ENCODE measurements at regions of chr16 and their contacts with region 1.

Region 1: DNA sequence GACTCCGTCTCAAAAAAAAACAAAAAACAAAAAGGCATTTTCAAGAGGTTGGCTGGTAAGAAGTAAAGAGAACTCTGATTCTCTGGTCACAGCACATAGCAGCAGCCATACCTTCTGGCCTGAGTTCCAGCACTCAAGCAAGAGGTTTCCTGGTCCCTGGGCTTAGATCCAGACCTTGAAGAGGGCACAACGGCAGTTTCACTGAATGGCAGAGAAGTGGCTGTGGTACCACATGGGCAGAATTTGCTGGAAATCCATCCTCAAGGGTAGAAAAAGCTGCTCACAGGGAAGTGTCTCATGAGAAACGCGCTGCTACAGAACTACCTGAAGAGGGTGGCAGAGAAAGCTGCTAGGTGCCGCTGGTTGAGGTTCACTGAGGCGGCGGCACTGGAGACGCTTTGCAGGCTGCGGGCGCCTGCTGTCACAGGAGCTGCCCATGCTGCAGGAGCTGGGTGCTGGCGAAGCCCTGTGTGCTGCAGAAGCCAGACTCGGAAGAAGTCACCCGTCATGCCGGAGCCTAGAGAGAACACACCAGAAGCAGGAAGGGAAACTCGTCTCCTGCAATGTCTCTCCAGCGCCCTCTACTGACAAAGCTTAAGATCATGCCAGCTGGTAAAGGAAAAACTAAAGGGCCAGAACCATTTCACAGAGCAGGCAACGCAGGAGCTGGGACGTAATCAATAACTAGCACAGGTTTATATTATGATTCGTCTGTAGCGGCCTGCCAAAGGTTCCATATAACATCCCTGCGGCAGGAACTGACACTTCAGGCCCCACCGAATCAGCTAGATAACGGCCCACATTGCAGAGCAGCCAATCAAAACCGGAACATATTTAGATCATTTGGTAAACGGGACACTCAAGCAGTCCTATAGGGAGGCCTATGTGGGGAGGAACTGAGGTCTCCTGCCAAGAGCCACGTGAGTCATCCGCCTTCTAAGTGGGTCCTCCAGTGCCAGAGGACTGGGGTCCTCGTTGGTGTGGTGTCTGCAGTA is 5.4 kb upstream of the ZNF213 start:
- DNase-seq: peak; percentile 82
- H3K4me3 Mint-ChIP-seq: peak overlapping the region; percentile 88
- H3K27ac Mint-ChIP-seq: peak overlapping the region; percentile 88
- H3K4me1 Mint-ChIP-seq: peaks cover 31% of the 10 kb centered on the region
- H3K27me3 Mint-ChIP-seq: no peaks in the 10 kb centered on the region

Region 2: DNA sequence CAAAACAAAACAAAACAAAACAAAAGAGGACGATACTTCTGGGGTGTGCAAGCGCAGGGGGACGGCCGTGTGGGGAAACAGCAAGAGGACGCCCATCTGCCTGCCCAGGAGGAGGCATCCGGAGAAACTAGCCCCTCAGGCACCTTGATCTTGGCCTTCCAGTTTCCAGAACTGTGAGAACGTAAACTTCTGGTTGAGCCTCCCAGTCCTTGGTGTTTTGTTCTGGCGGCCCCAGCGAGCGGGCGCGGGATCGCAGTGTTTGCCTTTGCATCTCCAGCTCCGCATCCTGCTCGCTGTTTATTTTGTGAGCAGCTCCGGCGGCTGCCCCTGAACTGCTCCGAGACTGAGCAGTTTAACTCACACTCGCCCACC is 84.1 kb before region 1 on chr16:
- CTCF ChIA-PET with region 1: interaction called, 16 read pairs
- POLR2A ChIA-PET with region 1: no interaction called
- intact Hi-C with region 1: no loop called
- DNase-seq: peak; percentile 54
- H3K4me3 Mint-ChIP-seq: peak overlapping the region; percentile 68
- H3K27ac Mint-ChIP-seq: no peak overlapping the region
- H3K4me1 Mint-ChIP-seq: peaks cover 14% of the 10 kb centered on the region
- H3K27me3 Mint-ChIP-seq: peaks cover 30% of the 10 kb centered on the region

Region 3: DNA sequence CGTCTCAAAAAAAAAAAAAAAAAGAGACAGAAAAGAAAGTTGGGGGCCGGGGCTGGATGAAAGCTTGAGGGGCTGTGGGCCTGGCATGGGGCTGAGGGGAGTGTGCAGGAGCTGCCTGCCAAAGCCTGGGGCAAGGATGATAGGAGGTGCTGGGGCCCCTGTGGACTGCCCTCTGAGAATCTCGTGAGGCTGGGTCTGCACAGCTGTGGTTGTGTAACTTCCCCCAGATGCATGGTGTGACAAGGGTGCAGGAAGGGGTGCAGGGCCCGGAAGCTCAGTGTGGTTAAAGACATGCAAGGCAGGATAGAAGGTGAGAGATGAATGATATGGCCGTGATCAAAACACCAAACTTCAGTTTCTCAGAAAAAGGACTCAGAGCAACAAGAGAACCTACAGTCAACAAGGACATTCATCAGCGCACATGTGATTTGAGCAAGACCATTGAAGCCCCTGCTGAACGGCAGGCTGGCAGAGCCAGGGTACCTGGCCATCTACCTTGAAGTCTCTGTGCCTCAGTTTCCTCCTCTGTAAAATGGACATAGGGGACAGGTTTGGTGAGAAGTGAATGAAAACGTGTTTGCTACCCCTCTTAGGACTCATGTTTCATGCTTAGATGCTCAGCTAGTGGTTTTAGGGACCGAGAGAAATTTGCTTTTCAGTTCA is 54.4 kb before region 1 on chr16:
- CTCF ChIA-PET with region 1: interaction called, 31 read pairs
- POLR2A ChIA-PET with region 1: interaction called, 6 read pairs
- intact Hi-C with region 1: no loop called
- DNase-seq: peak; percentile 94
- H3K4me3 Mint-ChIP-seq: peak overlapping the region; percentile 78
- H3K27ac Mint-ChIP-seq: peak overlapping the region; percentile 99
- H3K4me1 Mint-ChIP-seq: peaks cover 89% of the 10 kb centered on the region
- H3K27me3 Mint-ChIP-seq: no peaks in the 10 kb centered on the region

Region 4: GRCh38 chr16:3113765-3114479 is 15.5 kb before region 1 on chr16:
- CTCF ChIA-PET with region 1: interaction called, 22 read pairs
- POLR2A ChIA-PET with region 1: interaction called, 3 read pairs
- intact Hi-C with region 1: no loop called
- DNase-seq: no peak
- H3K4me3 Mint-ChIP-seq: no peak overlapping the region
- H3K27ac Mint-ChIP-seq: no peak overlapping the region
- H3K4me1 Mint-ChIP-seq: no peaks in the 10 kb centered on the region
- H3K27me3 Mint-ChIP-seq: peaks cover 12% of the 10 kb centered on the region

Region 5: GRCh38 chr16:3158471-3159314 is 29.3 kb after region 1 on chr16:
- CTCF ChIA-PET with region 1: interaction called, 15 read pairs
- POLR2A ChIA-PET with region 1: interaction called, 8 read pairs
- intact Hi-C with region 1: no loop called
- DNase-seq: peak; percentile 92
- H3K4me3 Mint-ChIP-seq: peak overlapping the region; percentile 91
- H3K27ac Mint-ChIP-seq: peak overlapping the region; percentile 83
- H3K4me1 Mint-ChIP-seq: peaks cover 19% of the 10 kb centered on the region
- H3K27me3 Mint-ChIP-seq: peaks cover 4% of the 10 kb centered on the region

Measured in activated CD4-positive, alpha-beta memory T cell treated with anti-CD3 and anti-CD28 coated beads for 36 hours (primary cell).